Naive thymus-derived CD8-positive, alpha-beta T cell (primary cell): ENCODE measurements at regions of chr3 and their contacts with region 1.

Region 1: GRCh38 chr3:149812606-149813366 is at the start of gene RNF13:
- DNase-seq: peak; percentile 86 to 97 (median 92)
- ATAC-seq: peak; percentile 95 to 96
- H3K4me3 Mint-ChIP-seq: peak within 1 kb of the TSS; percentile 94 to 100 (median 99)
- H3K27ac Mint-ChIP-seq: peak within 1 kb of the TSS; percentile 96 to 100 (median 99)
- H3K4me1 Mint-ChIP-seq: peaks cover 32 to 56% (median 48%) of the 10 kb centered on the region in 4 donors
- H3K27me3 Mint-ChIP-seq: peaks cover 0 to 4% (median 3%) of the 10 kb centered on the region in 5 donors
- polyA plus RNA-seq, gene RNF13: 81.4 to 136 (median 132) TPM

Region 2: DNA sequence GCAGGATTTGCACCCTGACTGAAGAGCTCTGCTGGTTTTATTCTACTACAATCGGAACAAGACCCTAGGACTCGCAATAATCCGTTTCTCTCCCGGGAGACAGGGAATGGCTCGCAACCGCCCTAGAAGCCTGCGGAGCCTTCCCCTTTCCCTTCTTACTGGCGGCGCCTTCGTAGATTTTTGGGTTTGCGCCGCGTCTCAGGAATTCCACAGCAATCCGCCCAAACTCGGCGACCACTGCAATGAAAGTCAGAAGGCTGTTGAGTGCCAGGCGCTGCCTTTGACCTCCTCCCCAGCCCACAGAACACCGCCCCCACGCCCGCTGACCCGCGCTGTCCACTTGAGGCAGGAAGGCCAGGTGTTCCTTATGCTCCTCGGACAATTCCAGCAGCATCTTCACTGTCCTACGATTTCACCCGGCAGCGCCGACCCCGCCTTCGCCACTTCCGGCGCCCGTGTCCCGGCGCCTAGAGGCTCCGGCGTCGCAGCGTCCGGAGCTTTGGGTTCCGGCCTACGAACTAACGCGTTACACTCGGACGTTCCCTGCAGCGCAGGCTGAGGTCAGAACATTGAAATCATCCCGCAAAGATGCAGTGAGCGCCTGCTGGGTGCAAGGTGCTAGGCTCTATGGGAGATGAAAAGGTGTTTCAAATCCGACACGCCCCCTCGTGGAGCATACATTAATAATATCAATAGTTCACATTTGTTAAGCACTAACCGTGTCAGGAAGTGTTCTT is 60.6 kb before region 1 on chr3 and contains the start of gene COMMD2:
- POLR2A ChIA-PET with region 1: interaction called, 11 read pairs
- DNase-seq: peak; percentile 44 to 74 (median 62)
- ATAC-seq: peak; percentile 91 to 93
- H3K4me3 Mint-ChIP-seq: peak within 1 kb of the TSS; percentile 91 to 99 (median 97)
- H3K27ac Mint-ChIP-seq: peak within 1 kb of the TSS; percentile 88 to 98 (median 96)
- H3K4me1 Mint-ChIP-seq: peaks cover 10 to 42% (median 32%) of the 10 kb centered on the region in 4 donors
- H3K27me3 Mint-ChIP-seq: peaks cover 0 to under 1% (median 0%) of the 10 kb centered on the region in 5 donors
- polyA plus RNA-seq, gene COMMD2: 64.9 to 84.2 (median 69.1) TPM